ENCODE measurements at regions of chr3 and their contacts with region 1.

Region 1: GRCh38 chr3:114213627-114214541 is 23.5 kb downstream of the ZNF80 start:
- DNase-seq: peak; percentile 88
- ATAC-seq: peak; percentile 67
- H3K4me3 Mint-ChIP-seq: no peak overlapping the region
- H3K27ac Mint-ChIP-seq: no peak overlapping the region
- H3K4me1 Mint-ChIP-seq: peaks cover 17% of the 10 kb centered on the region
- H3K27me3 Mint-ChIP-seq: no peaks in the 10 kb centered on the region

Region 2: GRCh38 chr3:114079761-114080160 is 134.1 kb before region 1 on chr3:
- CTCF ChIA-PET with region 1: no interaction called
- DNase-seq: no peak
- ATAC-seq: no peak
- H3K4me3 Mint-ChIP-seq: no peak overlapping the region
- H3K27ac Mint-ChIP-seq: no peak overlapping the region
- H3K4me1 Mint-ChIP-seq: no peaks in the 10 kb centered on the region
- H3K27me3 Mint-ChIP-seq: no peaks in the 10 kb centered on the region

Region 3: GRCh38 chr3:114122027-114122709 is 91.7 kb before region 1 on chr3:
- CTCF ChIA-PET with region 1: no interaction called
- DNase-seq: no peak
- ATAC-seq: no peak
- H3K4me3 Mint-ChIP-seq: no peak overlapping the region
- H3K27ac Mint-ChIP-seq: no peak overlapping the region
- H3K4me1 Mint-ChIP-seq: no peaks in the 10 kb centered on the region
- H3K27me3 Mint-ChIP-seq: peaks cover 3% of the 10 kb centered on the region

Region 4: DNA sequence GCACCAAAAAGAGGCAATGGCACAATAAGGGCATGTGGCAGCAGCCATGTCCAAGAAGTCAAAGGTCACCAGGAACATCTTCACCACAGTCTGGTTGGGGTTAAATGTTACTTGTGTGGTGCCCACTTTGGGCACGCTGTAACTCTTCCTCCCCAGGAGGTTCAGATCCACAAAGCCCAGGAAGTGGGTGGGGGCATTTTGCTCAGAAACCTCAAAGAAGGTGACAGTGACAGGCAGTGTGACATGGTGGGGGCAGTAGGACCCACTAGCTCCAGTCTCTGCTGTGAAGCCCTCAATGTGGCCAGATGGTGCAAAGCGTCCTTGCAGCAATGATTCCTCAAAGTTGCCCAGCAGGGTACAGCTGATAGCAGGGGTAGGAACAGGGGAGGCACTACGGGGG is 17.7 kb after region 1 on chr3:
- CTCF ChIA-PET with region 1: interaction called, 20 read pairs
- DNase-seq: peak; percentile 80
- ATAC-seq: peak; percentile 68
- H3K4me3 Mint-ChIP-seq: no peak overlapping the region
- H3K27ac Mint-ChIP-seq: peak overlapping the region; percentile 86
- H3K4me1 Mint-ChIP-seq: peaks cover 81% of the 10 kb centered on the region
- H3K27me3 Mint-ChIP-seq: no peaks in the 10 kb centered on the region

Region 5: DNA sequence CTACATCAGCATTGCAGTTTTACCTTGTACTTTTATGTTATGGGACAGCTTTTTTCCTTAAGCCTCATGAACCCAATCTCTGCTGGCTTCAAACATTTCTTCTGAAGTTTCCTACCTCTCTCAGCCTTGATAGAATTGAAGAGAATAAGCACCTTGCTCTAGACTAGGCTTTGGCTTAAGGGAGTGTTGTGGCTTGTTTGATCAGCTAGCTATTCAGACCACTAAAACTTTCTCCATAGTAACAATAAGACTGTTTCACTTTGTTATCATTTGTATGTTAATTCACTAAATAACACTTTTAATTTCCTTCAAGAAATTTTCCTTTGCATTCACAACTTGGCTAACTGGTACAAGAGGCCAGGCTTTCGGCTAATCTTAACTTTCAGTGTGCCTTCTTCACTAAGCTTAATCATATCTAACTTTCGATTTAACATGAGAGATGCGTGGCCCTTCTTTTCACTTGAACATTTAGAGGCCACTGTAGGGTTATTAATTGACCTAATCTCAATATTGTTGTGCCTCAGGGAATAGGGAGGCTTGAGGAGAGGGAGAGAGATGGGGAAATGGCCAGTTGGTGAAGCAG is 71.9 kb after region 1 on chr3:
- CTCF ChIA-PET with region 1: interaction called, 152 read pairs
- DNase-seq: no peak
- ATAC-seq: peak; percentile 76
- H3K4me3 Mint-ChIP-seq: peak overlapping the region; percentile 62
- H3K27ac Mint-ChIP-seq: peak overlapping the region; percentile 96
- H3K4me1 Mint-ChIP-seq: peaks cover 35% of the 10 kb centered on the region
- H3K27me3 Mint-ChIP-seq: no peaks in the 10 kb centered on the region

Region 6: GRCh38 chr3:114299421-114299820 is 85.5 kb after region 1 on chr3:
- CTCF ChIA-PET with region 1: interaction called, 152 read pairs
- DNase-seq: peak; percentile 70
- ATAC-seq: peak; percentile 45
- H3K4me3 Mint-ChIP-seq: peak overlapping the region; percentile 57
- H3K27ac Mint-ChIP-seq: peak overlapping the region; percentile 79
- H3K4me1 Mint-ChIP-seq: peaks cover 73% of the 10 kb centered on the region
- H3K27me3 Mint-ChIP-seq: no peaks in the 10 kb centered on the region

Region 7: GRCh38 chr3:114308830-114309229 is 94.9 kb after region 1 on chr3:
- CTCF ChIA-PET with region 1: interaction called, 16 read pairs
- DNase-seq: peak; percentile 84
- ATAC-seq: peak; percentile 87
- H3K4me3 Mint-ChIP-seq: peak overlapping the region; percentile 54
- H3K27ac Mint-ChIP-seq: peak overlapping the region; percentile 95
- H3K4me1 Mint-ChIP-seq: peaks cover 82% of the 10 kb centered on the region
- H3K27me3 Mint-ChIP-seq: no peaks in the 10 kb centered on the region

Region 8: GRCh38 chr3:114542359-114542758 is 328.5 kb after region 1 on chr3:
- CTCF ChIA-PET with region 1: no interaction called
- DNase-seq: no peak
- ATAC-seq: no peak
- H3K4me3 Mint-ChIP-seq: no peak overlapping the region
- H3K27ac Mint-ChIP-seq: no peak overlapping the region
- H3K4me1 Mint-ChIP-seq: no peaks in the 10 kb centered on the region
- H3K27me3 Mint-ChIP-seq: no peaks in the 10 kb centered on the region

Measured in activated CD8-positive, alpha-beta memory T cell treated with anti-CD3 and anti-CD28 coated beads, Interleukin-2, amount 10 ng/mL, durations not matched to agents 7 days and 5 days (primary cell).